Activated CD4-positive, alpha-beta memory T cell treated with anti-CD3 and anti-CD28 coated beads for 36 hours (primary cell): ENCODE measurements at regions of chr2 and their contacts with region 1.

Region 1: GRCh38 chr2:60550178-60550983 is 3.1 kb downstream of the BCL11A start:
- DNase-seq: peak; percentile 64
- H3K4me3 Mint-ChIP-seq: peak overlapping the region; percentile 79
- H3K27ac Mint-ChIP-seq: no peak overlapping the region
- H3K4me1 Mint-ChIP-seq: peaks cover 34% of the 10 kb centered on the region
- H3K27me3 Mint-ChIP-seq: peaks cover 64% of the 10 kb centered on the region

Region 2: GRCh38 chr2:58571181-58571852 is 1979.1 kb before region 1 on chr2:
- CTCF ChIA-PET with region 1: no interaction called
- POLR2A ChIA-PET with region 1: no interaction called
- intact Hi-C with region 1: loop called (anchors 5 kb)
- DNase-seq: no peak
- H3K4me3 Mint-ChIP-seq: no peak overlapping the region
- H3K27ac Mint-ChIP-seq: no peak overlapping the region
- H3K4me1 Mint-ChIP-seq: no peaks in the 10 kb centered on the region
- H3K27me3 Mint-ChIP-seq: no peaks in the 10 kb centered on the region

Region 3: GRCh38 chr2:58762176-58762781 is 1788.1 kb before region 1 on chr2:
- CTCF ChIA-PET with region 1: no interaction called
- POLR2A ChIA-PET with region 1: no interaction called
- intact Hi-C with region 1: loop called (anchors 10 kb)
- DNase-seq: peak; percentile 20
- H3K4me3 Mint-ChIP-seq: no peak overlapping the region
- H3K27ac Mint-ChIP-seq: no peak overlapping the region
- H3K4me1 Mint-ChIP-seq: no peaks in the 10 kb centered on the region
- H3K27me3 Mint-ChIP-seq: no peaks in the 10 kb centered on the region

Region 4: GRCh38 chr2:59301466-59302402 is 1248.6 kb before region 1 on chr2:
- CTCF ChIA-PET with region 1: no interaction called
- POLR2A ChIA-PET with region 1: no interaction called
- intact Hi-C with region 1: loop called (anchors 2 kb)
- DNase-seq: no peak
- H3K4me3 Mint-ChIP-seq: no peak overlapping the region
- H3K27ac Mint-ChIP-seq: no peak overlapping the region
- H3K4me1 Mint-ChIP-seq: no peaks in the 10 kb centered on the region
- H3K27me3 Mint-ChIP-seq: peaks cover 2% of the 10 kb centered on the region

Region 5: GRCh38 chr2:60560734-60561644 is 10.6 kb after region 1 on chr2:
- CTCF ChIA-PET with region 1: interaction called, 22 read pairs
- POLR2A ChIA-PET with region 1: no interaction called
- intact Hi-C with region 1: no loop called
- DNase-seq: no peak
- H3K4me3 Mint-ChIP-seq: no peak overlapping the region
- H3K27ac Mint-ChIP-seq: no peak overlapping the region
- H3K4me1 Mint-ChIP-seq: peaks cover 10% of the 10 kb centered on the region
- H3K27me3 Mint-ChIP-seq: peaks cover 58% of the 10 kb centered on the region

Region 6: GRCh38 chr2:60745761-60746160 is 195.4 kb after region 1 on chr2:
- CTCF ChIA-PET with region 1: no interaction called
- POLR2A ChIA-PET with region 1: no interaction called
- intact Hi-C with region 1: no loop called
- DNase-seq: no peak
- H3K4me3 Mint-ChIP-seq: no peak overlapping the region
- H3K27ac Mint-ChIP-seq: no peak overlapping the region
- H3K4me1 Mint-ChIP-seq: peaks cover 9% of the 10 kb centered on the region
- H3K27me3 Mint-ChIP-seq: peaks cover 1% of the 10 kb centered on the region